Endothelial cell of umbilical vein (primary cell): ENCODE measurements at regions of chr7 and their contacts with region 1.

Region 1: GRCh38 chr7:29564496-29565223 is 1.0 kb downstream of the PRR15 start:
- DNase-seq: peak; percentile 69
- H3K4me3 ChIP-seq: peak overlapping the region; percentile 56 to 92 (median 69)
- H3K27ac ChIP-seq: no peak overlapping the region
- H3K4me1 ChIP-seq: peaks cover 29% of the 10 kb centered on the region
- H3K27me3 ChIP-seq: peaks cover 0 to 13% of the 10 kb centered on the region in 2 experiments
- CTCF ChIP-seq: no peak
- POLR2A ChIP-seq: no peak

Region 2: DNA sequence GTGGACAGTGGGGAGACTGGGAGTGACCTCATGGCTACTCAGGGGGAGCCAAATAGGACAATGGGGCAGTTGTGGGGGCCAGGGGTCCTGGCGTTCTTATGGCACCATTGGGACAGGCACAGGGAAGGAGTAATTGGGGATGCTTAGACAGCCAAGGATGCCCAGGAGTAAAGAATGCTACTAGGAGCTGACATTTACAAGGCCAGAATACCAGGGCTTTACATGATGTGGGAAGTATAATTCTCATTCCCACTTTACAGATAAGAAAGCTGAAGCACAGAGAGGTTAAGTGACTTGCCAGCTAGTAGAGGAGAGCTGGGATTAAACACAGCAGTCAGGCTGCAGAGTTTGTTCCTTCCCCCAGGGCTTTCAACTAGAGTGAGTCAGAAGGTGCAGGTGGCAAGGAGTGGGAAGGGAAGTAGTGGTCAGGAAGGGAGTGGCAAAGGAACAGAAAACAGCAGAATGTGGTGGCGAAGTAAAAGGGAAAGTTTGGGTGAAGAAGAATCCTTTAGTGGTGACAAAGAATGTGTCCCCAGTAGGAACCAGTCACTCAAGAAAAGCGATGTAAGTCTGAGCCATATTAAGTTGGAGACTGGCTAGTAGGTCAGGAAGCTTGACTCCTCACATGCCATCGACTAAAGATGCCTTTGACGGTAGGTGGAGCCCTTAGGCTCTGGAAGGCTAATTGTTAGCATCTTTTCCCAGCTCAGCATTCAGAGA is 451.1 kb before region 1 on chr7:
- CTCF ChIA-PET with region 1: no interaction called
- POLR2A ChIA-PET with region 1: no interaction called
- dilution Hi-C with region 1: no loop called
- intact Hi-C with region 1: loop called (anchors 10 kb)
- DNase-seq: peak; percentile 46
- H3K4me3 ChIP-seq: no peak overlapping the region
- H3K27ac ChIP-seq: no peak overlapping the region
- H3K4me1 ChIP-seq: peaks cover 16% of the 10 kb centered on the region
- H3K27me3 ChIP-seq: peaks cover 8 to 13% of the 10 kb centered on the region in 2 experiments
- CTCF ChIP-seq: peak; percentile 3 to 42
- POLR2A ChIP-seq: no peak

Region 3: DNA sequence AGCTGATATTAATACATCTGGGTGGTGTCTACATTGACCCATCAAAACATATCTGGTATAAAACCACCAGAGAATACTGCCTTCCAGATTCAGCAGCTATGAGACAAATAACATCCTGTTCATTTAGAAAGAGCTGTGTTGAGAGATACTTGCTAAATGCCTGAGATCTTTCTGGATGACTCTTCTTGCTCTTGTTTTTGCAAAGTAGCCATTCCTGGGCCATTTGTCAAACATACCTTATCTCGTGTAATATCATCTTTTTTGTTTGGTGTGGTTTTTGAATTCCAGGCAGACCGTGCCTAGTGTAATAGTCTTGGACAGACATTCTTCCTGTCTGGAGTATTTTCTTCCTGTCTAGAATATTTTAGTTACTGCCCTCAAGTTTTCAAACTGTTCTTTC is 75.7 kb before region 1 on chr7:
- CTCF ChIA-PET with region 1: no interaction called
- POLR2A ChIA-PET with region 1: no interaction called
- dilution Hi-C with region 1: no loop called
- intact Hi-C with region 1: loop called (anchors 1 kb)
- DNase-seq: peak; percentile 86
- H3K4me3 ChIP-seq: peak overlapping the region in 1 of 3 experiments; percentile 37
- H3K27ac ChIP-seq: peak overlapping the region; percentile 89
- H3K4me1 ChIP-seq: peaks cover 29% of the 10 kb centered on the region
- H3K27me3 ChIP-seq: no peaks in the 10 kb centered on the region
- CTCF ChIP-seq: no peak
- POLR2A ChIP-seq: peak; percentile 21

Region 4: DNA sequence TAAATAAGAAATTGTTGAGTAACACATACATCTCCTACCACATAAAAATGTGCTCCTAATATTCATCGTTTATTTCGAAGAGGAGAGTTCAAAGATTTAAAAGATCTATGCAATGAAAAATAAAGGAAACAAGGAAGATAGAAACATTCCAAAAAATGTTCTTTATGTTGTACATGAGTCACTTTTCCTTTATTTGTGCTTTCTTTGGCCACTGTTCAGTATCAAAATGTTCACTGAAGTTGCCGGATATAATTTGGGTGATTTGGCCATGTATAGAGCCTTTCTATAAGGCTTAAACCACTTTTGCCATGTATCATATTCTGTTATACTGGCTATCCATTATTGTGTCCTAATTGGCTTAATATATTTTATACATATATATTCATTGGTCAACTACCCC is 63.9 kb before region 1 on chr7:
- CTCF ChIA-PET with region 1: no interaction called
- POLR2A ChIA-PET with region 1: no interaction called
- dilution Hi-C with region 1: no loop called
- intact Hi-C with region 1: loop called (anchors 5 kb)
- DNase-seq: peak; percentile 59
- H3K4me3 ChIP-seq: no peak overlapping the region
- H3K27ac ChIP-seq: no peak overlapping the region
- H3K4me1 ChIP-seq: peaks cover 20% of the 10 kb centered on the region
- H3K27me3 ChIP-seq: no peaks in the 10 kb centered on the region
- CTCF ChIP-seq: no peak
- POLR2A ChIP-seq: no peak

Region 5: DNA sequence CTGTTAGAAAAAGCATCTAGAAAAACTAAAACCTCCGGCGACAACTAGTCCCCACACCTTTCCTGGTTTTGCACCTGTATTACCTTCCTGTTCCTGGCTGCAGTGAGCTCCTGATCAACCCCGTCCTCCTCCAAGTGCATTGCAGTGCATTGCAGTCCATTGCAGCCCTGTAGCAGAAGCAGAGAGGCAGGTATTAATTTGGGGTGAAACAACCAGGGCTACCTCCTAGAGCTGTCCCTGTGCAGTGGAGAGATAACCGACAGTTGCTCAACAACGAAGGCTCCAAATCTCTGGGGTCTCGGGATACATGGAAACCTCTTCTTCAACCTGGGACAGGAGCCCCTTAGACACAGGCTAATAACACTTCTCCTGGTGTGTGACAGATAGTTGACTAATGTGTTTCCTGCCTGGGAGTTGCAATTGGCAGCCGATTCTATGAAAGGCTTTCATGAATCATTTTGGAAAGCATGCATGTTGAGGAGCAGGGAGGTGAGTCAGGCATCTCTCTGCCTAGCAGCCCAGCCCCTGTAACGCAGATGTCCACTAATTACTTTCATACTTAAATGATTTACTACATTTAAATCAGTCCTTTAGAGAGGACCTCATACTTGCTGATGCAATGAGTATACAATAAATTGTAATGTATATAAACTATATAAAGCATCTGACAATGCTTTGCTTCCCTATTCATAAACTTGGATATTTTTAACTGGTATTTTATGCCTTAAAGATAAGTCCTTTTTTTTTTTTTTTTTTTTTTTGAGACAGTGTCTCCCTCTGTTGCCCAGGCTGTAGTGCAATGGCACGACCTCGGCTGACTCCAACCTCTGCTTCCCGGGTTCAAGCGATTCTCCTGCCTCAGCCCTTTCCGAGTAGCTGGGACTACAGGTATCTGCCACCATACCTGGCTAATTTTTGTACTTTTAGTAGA is 57.9 kb after region 1 on chr7:
- CTCF ChIA-PET with region 1: no interaction called
- POLR2A ChIA-PET with region 1: no interaction called
- dilution Hi-C with region 1: no loop called
- intact Hi-C with region 1: loop called (anchors 5 kb)
- DNase-seq: peak; percentile 91
- H3K4me3 ChIP-seq: no peak overlapping the region
- H3K27ac ChIP-seq: peak overlapping the region; percentile 53
- H3K4me1 ChIP-seq: peaks cover 6% of the 10 kb centered on the region
- H3K27me3 ChIP-seq: no peaks in the 10 kb centered on the region
- CTCF ChIP-seq: no peak
- POLR2A ChIP-seq: no peak

Region 6: DNA sequence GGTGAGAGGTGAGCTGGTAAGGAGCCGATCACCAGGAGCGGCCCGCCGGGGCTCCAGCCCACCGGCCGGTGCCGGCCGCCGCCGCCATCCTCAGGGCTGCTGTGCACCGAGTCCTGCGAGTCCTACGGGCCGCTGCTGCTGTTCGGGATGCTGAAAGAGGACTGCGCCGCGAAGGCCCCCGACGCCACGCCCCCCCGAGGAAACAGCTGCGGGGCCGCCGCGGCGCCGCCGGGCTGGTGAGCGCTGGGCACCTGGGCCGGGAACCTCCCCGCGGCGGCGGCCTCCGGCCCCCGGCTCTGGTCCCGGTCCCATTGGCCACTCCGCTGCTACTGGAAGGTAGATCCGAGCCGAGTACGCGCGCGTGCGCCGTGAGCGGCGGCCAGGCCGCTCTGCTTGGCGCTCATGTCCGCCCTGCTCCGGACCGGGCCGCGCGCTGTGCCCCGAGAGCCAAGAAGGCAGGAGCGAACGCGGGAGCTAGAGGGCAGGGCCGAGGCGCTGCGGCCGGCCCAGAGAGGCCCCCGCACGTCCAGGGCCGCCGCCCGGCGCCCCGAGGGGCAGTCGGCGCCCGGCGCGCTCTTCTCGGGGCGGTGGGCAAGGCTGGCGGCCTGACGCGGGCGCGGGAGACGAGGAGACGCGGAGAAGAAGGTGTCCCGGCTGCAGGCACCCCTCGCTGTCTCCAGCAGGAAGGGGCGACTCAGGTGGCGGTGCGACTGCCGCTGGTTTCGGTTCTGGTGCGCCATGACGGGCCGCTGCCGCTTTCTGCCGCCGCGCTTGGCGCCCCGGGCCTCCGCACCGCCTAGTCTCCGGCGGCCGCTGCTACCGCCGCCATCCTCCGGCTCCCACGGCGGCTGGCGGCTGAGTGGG is 120.4 kb after region 1 on chr7:
- CTCF ChIA-PET with region 1: no interaction called
- POLR2A ChIA-PET with region 1: no interaction called
- dilution Hi-C with region 1: no loop called
- intact Hi-C with region 1: loop called (anchors 10 kb)
- DNase-seq: peak; percentile 77
- H3K4me3 ChIP-seq: peak overlapping the region; percentile 52 to 68 (median 56)
- H3K27ac ChIP-seq: peak overlapping the region; percentile 58
- H3K4me1 ChIP-seq: no peaks in the 10 kb centered on the region
- H3K27me3 ChIP-seq: no peaks in the 10 kb centered on the region
- CTCF ChIP-seq: no peak
- POLR2A ChIP-seq: no peak